A549 (cell line): ENCODE measurements at regions of chr7 and their contacts with region 1.

Region 1: GRCh38 chr7:151448261-151449252 is 8.6 kb upstream of the CRYGN start:
- DNase-seq: peak; percentile 69 to 90
- ATAC-seq: peak; percentile 90 to 92
- H3K4me3 ChIP-seq: peak overlapping the region; percentile 51
- H3K27ac ChIP-seq: peak overlapping the region; percentile 83 to 98
- H3K4me1 ChIP-seq: peaks cover 11% of the 10 kb centered on the region; the same call in 2 of the 3 replicates
- CTCF ChIP-seq: peak; percentile 90
- EP300 ChIP-seq: no peak
- POLR2A ChIP-seq: no peak; the same call in 1 of the 2 replicates
- RAD21 ChIP-seq: peak; percentile 90 to 96

Region 2: DNA sequence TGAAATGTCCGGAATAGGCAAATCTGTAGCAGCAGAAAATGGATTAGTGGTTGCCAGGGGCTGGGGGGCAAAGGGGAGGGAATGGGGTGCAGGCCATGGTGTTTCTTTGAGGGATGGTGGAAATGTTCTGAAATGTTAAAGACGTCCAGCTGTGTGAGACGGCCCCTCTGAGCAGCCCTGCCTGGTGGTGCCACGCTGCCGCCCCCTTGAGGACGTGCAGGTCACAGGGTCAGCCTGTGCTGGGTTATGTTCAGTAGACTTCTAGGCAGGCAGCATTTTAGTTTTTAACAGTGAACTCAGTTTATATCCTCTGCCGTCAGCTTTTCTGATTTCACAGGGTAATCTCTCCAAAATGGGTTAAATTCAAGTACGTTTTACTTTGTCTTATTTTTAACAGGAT is 97.5 kb before region 1 on chr7:
- CTCF ChIA-PET with region 1: interaction called, 78 read pairs
- POLR2A ChIA-PET with region 1: no interaction called
- DNase-seq: peak; percentile 32 to 35
- ATAC-seq: peak; percentile 80 to 89; a peak in 4 of 6 replicates
- H3K4me3 ChIP-seq: no peak overlapping the region
- H3K27ac ChIP-seq: no peak overlapping the region
- H3K4me1 ChIP-seq: peaks cover 26% of the 10 kb centered on the region
- CTCF ChIP-seq: peak; percentile 35
- EP300 ChIP-seq: no peak
- POLR2A ChIP-seq: no peak
- RAD21 ChIP-seq: peak in 1 of 2 experiments; percentile 30; a peak in 2 of 5 replicates

Region 3: DNA sequence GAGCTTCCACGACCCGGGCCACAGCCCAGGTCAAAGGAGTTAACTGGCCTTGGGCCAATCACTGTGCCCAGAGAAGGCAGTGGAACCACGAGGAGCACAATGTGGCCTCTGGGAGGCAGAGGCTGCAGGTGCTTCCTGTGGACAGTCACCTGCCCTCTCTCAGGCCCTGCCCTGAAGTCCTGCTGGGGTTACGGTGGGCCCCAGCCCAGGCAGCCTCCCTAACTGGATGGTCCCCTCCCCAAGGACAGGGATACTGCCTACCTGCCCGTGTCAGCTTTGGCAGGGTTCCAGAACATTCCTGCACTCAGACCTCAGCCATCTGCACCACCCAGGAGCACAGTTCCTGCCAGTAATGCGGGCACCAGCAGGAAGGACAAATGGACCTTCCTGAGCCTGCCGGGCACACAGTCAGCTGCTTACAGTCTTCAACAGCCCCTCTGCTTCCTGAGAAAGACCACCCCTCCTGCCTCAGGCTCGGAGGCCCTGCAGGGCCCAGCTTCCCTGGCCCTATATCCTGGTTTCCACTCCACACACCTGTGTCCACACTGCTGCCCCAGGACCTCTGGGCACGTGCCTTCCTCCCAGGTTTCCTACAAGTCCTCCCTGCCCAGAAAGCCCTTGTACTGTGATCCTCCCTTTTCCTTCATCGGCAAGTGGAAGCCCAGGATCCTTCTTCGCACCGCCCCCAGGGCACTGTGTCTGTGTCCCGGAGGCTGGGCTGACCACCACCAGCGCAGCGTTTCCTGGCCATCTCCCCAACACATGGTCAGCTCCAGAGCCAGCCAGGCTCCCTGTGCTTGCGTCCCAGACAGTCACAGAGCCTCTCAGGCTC is 62.0 kb before region 1 on chr7:
- CTCF ChIA-PET with region 1: interaction called, 438 read pairs
- POLR2A ChIA-PET with region 1: no interaction called
- DNase-seq: no peak
- ATAC-seq: peak in 1 of 2 experiments; percentile 7; a peak in 2 of 6 replicates
- H3K4me3 ChIP-seq: no peak overlapping the region
- H3K27ac ChIP-seq: peak overlapping the region in 1 of 2 experiments; percentile 17; a peak in 1 of 6 replicates
- H3K4me1 ChIP-seq: 0 out of 3 replicates have a peak, but pooled peaks cover 4% of the 10 kb centered on the region
- CTCF ChIP-seq: no peak
- EP300 ChIP-seq: no peak
- POLR2A ChIP-seq: no peak
- RAD21 ChIP-seq: no peak

Region 4: GRCh38 chr7:151400626-151401315 is 47.8 kb before region 1 on chr7:
- CTCF ChIA-PET with region 1: interaction called, 19 read pairs
- POLR2A ChIA-PET with region 1: no interaction called
- DNase-seq: no peak
- ATAC-seq: no peak
- H3K4me3 ChIP-seq: no peak overlapping the region
- H3K27ac ChIP-seq: no peak overlapping the region; a peak in 1 of 6 replicates
- H3K4me1 ChIP-seq: peaks cover 20% of the 10 kb centered on the region
- CTCF ChIP-seq: no peak
- EP300 ChIP-seq: no peak
- POLR2A ChIP-seq: no peak
- RAD21 ChIP-seq: no peak

Region 5: GRCh38 chr7:151424461-151425198 is 23.9 kb before region 1 on chr7:
- CTCF ChIA-PET with region 1: interaction called, 22 read pairs
- POLR2A ChIA-PET with region 1: no interaction called
- DNase-seq: no peak
- ATAC-seq: no peak
- H3K4me3 ChIP-seq: no peak overlapping the region
- H3K27ac ChIP-seq: peak overlapping the region; percentile 81 to 85; a peak in 4 of 6 replicates
- H3K4me1 ChIP-seq: peaks cover 47% of the 10 kb centered on the region
- CTCF ChIP-seq: no peak
- EP300 ChIP-seq: no peak
- POLR2A ChIP-seq: no peak
- RAD21 ChIP-seq: no peak

Region 6: GRCh38 chr7:151459726-151460473 is 11.3 kb after region 1 on chr7:
- CTCF ChIA-PET with region 1: interaction called, 89 read pairs
- POLR2A ChIA-PET with region 1: interaction called, 3 read pairs
- DNase-seq: peak; percentile 61 to 90
- ATAC-seq: peak; percentile 81 to 90
- H3K4me3 ChIP-seq: peak overlapping the region; percentile 15; the same call in 1 of the 3 replicates
- H3K27ac ChIP-seq: peak overlapping the region; percentile 76 to 83
- H3K4me1 ChIP-seq: peaks cover 23% of the 10 kb centered on the region
- CTCF ChIP-seq: peak; percentile 36; the same call in 2 of the 3 replicates
- EP300 ChIP-seq: no peak
- POLR2A ChIP-seq: no peak
- RAD21 ChIP-seq: peak; percentile 48 to 63

Region 7: GRCh38 chr7:151484971-151485707 is 36.6 kb after region 1 on chr7:
- CTCF ChIA-PET with region 1: interaction called, 14 read pairs
- POLR2A ChIA-PET with region 1: no interaction called
- DNase-seq: peak in 1 of 2 experiments; percentile 69
- ATAC-seq: peak; percentile 67 to 79; a peak in 5 of 6 replicates
- H3K4me3 ChIP-seq: no peak overlapping the region
- H3K27ac ChIP-seq: no peak overlapping the region
- H3K4me1 ChIP-seq: peaks cover 40% of the 10 kb centered on the region
- CTCF ChIP-seq: no peak
- EP300 ChIP-seq: no peak
- POLR2A ChIP-seq: no peak
- RAD21 ChIP-seq: no peak

Region 8: DNA sequence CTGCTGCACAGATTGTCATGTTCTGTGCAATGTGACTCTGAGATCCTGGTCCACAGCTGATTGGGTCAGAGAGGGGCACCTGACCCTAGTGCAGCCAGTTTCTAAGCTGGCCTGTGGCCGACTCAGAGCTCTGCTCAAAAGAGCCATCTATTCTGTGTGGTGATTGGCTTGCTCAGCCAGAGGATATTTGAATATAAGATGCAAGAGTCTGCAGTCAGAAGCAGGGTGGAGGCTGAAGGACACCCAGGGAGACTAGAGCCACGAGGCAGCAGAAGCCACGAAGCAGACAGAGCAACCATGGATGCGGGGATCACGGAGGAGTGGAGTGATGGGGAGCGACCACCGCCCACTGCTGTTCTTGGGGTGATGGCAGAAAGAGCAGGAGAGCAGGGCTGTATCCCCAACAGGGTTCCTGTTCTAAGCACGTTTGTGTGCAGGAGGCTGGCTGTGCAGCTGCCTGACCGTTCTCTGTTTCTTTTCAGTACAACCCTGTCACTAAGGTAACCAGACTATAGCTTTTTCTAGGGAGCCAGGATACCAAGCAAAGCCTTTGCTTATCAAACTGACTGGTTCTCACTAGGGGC is 90.6 kb after region 1 on chr7:
- CTCF ChIA-PET with region 1: no interaction called
- POLR2A ChIA-PET with region 1: no interaction called
- DNase-seq: no peak
- ATAC-seq: peak; percentile 71 to 78
- H3K4me3 ChIP-seq: no peak overlapping the region
- H3K27ac ChIP-seq: no peak overlapping the region
- H3K4me1 ChIP-seq: no peaks in the 10 kb centered on the region
- CTCF ChIP-seq: no peak
- EP300 ChIP-seq: no peak
- POLR2A ChIP-seq: no peak
- RAD21 ChIP-seq: no peak